ENCODE measurements at regions of chr10 and their contacts with region 1.

Region 1: DNA sequence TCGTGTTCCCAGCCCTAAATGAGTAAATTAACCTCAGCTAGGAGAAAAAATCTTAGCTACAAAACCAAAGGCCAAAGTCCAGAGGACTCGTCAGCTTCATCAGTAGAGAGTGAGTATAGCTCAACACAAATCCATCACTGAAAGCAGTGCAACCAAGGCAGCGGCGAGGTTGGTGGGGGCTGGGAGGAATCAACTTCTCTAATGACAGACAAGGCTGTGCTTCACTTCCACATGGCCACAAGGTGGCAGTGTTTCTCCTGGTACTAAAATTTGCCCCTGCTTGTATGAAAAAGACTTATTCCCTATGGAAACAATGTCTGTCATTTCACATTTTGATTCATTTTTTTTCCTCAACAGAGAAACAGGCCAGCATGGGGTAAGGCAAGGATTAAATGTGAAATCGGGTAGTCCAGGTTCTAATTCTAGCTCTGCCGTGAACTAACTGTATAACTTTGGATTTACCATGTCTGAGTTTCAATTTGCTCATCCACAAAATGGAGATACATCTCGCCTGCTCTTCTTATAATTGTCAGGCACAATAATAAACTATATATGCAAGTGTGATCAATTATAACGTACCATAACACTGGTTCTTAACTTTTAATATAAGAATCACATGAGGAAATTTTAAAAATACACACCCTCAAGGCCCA is 39.3 kb downstream of the FAS start:
- DNase-seq: peak; percentile 85
- ATAC-seq: peak; percentile 64
- H3K4me3 Mint-ChIP-seq: no peak overlapping the region
- H3K27ac Mint-ChIP-seq: no peak overlapping the region
- H3K4me1 Mint-ChIP-seq: peaks cover 32% of the 10 kb centered on the region
- H3K27me3 Mint-ChIP-seq: no peaks in the 10 kb centered on the region

Region 2: GRCh38 chr10:88996927-88997326 is 33.0 kb before region 1 on chr10:
- CTCF ChIA-PET with region 1: interaction called, 21 read pairs
- POLR2A ChIA-PET with region 1: interaction called, 5 read pairs
- intact Hi-C with region 1: no loop called
- DNase-seq: no peak
- ATAC-seq: no peak
- H3K4me3 Mint-ChIP-seq: no peak overlapping the region
- H3K27ac Mint-ChIP-seq: no peak overlapping the region
- H3K4me1 Mint-ChIP-seq: peaks cover 67% of the 10 kb centered on the region
- H3K27me3 Mint-ChIP-seq: no peaks in the 10 kb centered on the region

Region 3: DNA sequence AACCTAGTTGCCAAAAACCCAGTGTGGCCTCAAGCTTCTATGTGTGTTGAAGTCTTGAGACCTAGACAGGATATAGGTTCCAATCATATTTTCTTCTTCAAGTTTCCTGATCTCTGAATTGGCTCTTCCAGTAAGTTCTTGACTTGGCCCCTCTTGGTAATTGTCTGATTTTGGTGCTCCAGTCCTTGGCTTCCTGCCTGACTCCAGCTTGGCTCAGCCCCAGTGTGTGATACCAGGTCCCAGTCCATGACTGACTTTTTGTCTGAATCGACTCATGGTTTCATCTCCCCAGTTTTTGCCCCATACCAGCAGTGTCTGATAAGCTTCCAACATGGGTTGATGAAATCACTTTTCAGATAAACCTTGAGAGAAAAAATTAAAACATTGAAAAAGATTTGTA is 33.0 kb after region 1 on chr10:
- CTCF ChIA-PET with region 1: interaction called, 13 read pairs
- POLR2A ChIA-PET with region 1: no interaction called
- intact Hi-C with region 1: no loop called
- DNase-seq: peak; percentile 13
- ATAC-seq: peak; percentile 19
- H3K4me3 Mint-ChIP-seq: no peak overlapping the region
- H3K27ac Mint-ChIP-seq: no peak overlapping the region
- H3K4me1 Mint-ChIP-seq: peaks cover 3% of the 10 kb centered on the region
- H3K27me3 Mint-ChIP-seq: peaks cover 7% of the 10 kb centered on the region

Region 4: DNA sequence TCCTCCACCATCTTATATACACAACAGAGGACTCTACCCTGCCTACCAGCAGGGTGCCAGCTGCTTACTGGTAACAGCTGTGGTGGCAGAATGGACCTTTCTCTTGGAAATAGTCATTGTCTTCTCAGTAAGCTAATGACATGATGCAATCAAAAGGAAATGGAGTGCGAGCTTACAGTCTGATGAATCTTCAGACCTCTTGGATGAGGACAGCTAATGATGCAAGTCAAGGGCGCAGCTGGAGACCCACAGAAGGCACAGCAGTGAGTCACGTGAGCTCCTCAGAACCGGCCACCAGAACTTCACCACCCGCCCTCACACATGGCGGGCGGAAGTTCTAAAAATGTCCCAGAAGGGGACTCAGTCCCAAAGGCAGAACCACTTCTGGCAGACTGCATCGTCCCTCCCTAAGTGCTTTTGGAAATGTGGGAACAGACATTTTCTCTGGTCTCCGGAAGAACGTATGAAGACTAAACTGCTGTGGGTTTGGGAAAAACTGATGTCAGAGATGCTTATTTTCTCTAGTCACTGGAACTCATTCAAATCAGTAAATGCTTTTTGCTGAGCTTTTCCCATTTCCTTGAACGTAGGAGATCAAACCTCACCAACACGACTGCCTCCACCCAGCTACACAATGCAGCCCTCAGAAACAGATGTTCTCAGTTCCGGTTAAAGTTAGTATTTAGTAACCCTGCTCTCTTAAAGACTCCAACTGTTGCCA is 57.0 kb after region 1 on chr10:
- CTCF ChIA-PET with region 1: interaction called, 6 read pairs
- POLR2A ChIA-PET with region 1: no interaction called
- intact Hi-C with region 1: loop called (anchors 1 to 5 kb)
- DNase-seq: peak; percentile 53
- ATAC-seq: peak; percentile 55
- H3K4me3 Mint-ChIP-seq: peak overlapping the region; percentile 11
- H3K27ac Mint-ChIP-seq: peak overlapping the region; percentile 78
- H3K4me1 Mint-ChIP-seq: peaks cover 11% of the 10 kb centered on the region
- H3K27me3 Mint-ChIP-seq: peaks cover under 1% of the 10 kb centered on the region

Region 5: DNA sequence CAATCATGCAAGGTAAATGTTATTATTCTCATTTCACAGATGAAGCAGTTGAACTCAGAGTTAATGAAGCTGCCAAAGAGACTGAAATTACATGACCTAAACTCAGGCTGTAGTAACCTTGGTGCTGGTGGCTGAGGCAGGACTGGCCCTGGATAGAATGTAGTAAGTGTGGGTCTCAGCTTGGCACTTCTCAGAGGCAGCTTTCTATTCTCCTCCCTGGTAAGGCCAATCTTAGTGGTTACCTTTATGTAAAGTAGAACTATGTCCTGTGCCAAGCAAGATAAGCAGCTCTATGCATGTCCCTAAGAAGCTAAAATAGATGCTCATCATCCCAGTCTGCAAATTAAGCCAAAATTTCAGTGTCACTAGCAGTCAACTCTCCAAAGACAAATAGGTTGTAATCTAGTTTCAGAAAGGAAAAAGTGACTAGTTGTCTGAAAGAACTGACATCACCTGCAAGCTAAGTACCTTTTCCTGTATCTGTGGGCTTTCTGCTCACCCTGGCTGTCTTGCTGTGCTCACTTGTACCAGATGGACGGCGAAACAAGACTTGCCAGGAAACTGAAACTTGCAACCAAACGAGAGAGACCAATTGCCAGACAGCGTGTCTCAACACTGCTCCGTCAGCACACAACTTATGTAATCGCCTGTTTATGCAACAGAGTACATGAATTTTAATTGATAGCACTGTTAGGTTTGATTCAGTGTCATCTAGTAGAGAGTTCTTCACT is 133.5 kb after region 1 on chr10:
- CTCF ChIA-PET with region 1: interaction called, 5 read pairs
- POLR2A ChIA-PET with region 1: no interaction called
- intact Hi-C with region 1: loop called (anchors 1 to 2 kb)
- DNase-seq: peak; percentile 73
- ATAC-seq: peak; percentile 93
- H3K4me3 Mint-ChIP-seq: peak overlapping the region; percentile 38
- H3K27ac Mint-ChIP-seq: peak overlapping the region; percentile 84
- H3K4me1 Mint-ChIP-seq: peaks cover 37% of the 10 kb centered on the region
- H3K27me3 Mint-ChIP-seq: peaks cover 23% of the 10 kb centered on the region

Region 6: DNA sequence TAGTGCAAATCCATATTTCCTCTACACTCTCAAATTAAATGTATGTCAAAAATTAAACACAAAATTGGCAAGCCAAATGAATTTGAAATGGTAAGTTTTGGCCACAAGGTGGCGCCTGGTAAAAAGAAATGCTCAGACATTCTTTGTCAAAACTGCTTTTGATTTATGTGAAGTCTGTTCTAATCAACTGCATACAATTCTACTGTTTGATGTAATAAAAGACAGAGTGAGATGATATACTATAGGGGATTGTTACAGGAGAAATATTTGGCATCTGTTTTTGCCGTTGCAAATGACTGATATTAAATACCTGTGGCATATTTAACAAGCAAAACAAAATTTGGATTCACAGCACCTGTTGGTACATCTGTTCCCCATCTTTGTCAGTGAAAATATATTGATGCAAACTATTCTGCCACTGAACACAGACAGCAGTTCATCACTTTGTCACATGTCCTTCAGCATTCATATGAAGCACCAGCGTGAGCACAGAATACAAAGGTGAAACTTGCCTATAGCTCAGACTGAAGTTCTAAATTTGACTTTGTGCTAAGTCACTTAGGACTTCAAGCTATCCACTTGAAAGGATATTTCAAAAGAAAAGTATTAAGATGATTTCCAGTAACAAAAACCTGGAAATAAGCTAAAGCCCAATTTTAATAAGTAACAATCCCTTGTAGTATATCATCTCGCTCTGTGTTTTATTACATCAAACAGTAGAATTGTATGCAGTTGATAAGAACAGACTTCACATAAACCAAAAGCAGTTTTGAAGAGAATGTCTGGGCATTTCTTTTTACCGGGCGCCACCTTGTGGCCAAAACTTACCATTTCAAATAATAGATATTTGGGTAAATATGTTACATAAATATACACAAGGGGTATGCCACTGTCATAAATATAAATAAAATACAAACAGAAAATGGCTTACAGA is 187.4 kb after region 1 on chr10:
- CTCF ChIA-PET with region 1: interaction called, 84 read pairs
- POLR2A ChIA-PET with region 1: interaction called, 3 read pairs
- intact Hi-C with region 1: loop called (anchors 1 kb)
- DNase-seq: peak; percentile 76
- ATAC-seq: peak; percentile 55
- H3K4me3 Mint-ChIP-seq: no peak overlapping the region
- H3K27ac Mint-ChIP-seq: no peak overlapping the region
- H3K4me1 Mint-ChIP-seq: peaks cover 9% of the 10 kb centered on the region
- H3K27me3 Mint-ChIP-seq: no peaks in the 10 kb centered on the region

Region 7: DNA sequence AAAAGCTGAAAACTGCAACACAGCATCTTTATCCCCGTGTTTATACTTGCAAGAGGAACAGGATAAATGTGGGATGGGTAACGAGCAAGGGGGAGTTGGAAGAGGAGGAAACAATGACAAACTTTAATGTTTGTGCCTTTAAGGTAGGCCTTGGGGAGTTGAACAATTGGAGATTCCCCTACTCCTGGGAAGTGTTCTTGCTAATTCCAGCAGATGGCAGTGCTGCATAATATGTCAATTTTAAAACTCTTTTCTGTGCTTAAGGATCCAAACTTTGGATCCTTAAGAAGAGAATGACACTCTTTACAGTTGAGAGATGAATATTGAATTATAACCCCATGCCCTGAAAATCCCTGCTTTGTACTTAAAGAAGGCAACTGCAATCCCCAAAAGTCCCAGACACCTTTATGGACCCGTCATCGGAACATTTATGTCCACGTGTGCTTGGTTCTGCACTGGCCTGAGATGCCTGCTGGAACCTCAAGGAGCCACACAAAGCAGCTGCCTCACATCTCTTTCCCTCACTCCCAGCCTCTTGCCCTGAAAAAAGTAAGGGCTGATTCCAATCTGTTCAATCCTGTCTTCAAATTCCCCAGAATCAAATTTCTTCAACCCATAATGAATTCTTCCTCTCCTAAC is 396.4 kb after region 1 on chr10:
- CTCF ChIA-PET with region 1: no interaction called
- POLR2A ChIA-PET with region 1: no interaction called
- intact Hi-C with region 1: no loop called
- DNase-seq: no peak
- ATAC-seq: peak; percentile 76
- H3K4me3 Mint-ChIP-seq: no peak overlapping the region
- H3K27ac Mint-ChIP-seq: no peak overlapping the region
- H3K4me1 Mint-ChIP-seq: peaks cover under 1% of the 10 kb centered on the region
- H3K27me3 Mint-ChIP-seq: no peaks in the 10 kb centered on the region

Measured in activated CD4-positive, alpha-beta T cell treated with anti-CD3 and anti-CD28 coated beads for 36 hours (primary cell).